PC-9 (cell line): ENCODE measurements at regions of chr5 and their contacts with region 1.

Region 1: DNA sequence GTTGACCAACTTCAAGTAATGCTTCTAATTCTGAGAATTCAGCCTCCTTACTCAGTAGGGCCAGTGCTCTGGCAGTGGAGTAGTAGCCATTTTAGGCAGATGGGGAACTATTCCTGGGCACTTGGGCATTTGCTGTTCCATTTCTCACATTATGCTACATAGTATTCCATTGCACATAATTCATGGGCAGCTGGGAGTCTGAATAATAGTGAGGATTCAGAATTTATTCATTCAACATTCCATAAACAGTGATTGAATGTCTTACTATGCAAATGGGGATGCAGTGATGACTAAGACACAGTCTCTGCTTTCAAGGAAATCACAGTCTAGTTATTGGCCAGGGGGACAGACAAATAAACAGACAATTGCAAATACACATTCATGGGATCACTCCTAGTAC is 301.0 kb upstream of the KCNN2 start:
- DNase-seq: no peak
- H3K4me3 ChIP-seq: no peak overlapping the region
- H3K27ac ChIP-seq: no peak overlapping the region
- H3K4me1 ChIP-seq: no peaks in the 10 kb centered on the region
- H3K27me3 ChIP-seq: peaks cover 7% of the 10 kb centered on the region; the same call in 1 of the 2 replicates
- CTCF ChIP-seq: no peak

Region 2: GRCh38 chr5:114001076-114001475 is 59.8 kb before region 1 on chr5:
- CTCF ChIA-PET with region 1: no interaction called
- POLR2A ChIA-PET with region 1: no interaction called
- intact Hi-C with region 1: loop called (anchors 2 kb)
- DNase-seq: no peak
- H3K4me3 ChIP-seq: no peak overlapping the region
- H3K27ac ChIP-seq: no peak overlapping the region
- H3K4me1 ChIP-seq: no peaks in the 10 kb centered on the region
- H3K27me3 ChIP-seq: no peaks in the 10 kb centered on the region
- CTCF ChIP-seq: no peak

Region 3: GRCh38 chr5:114118511-114118910 is 57.6 kb after region 1 on chr5:
- CTCF ChIA-PET with region 1: no interaction called
- POLR2A ChIA-PET with region 1: no interaction called
- intact Hi-C with region 1: no loop called
- DNase-seq: no peak
- H3K4me3 ChIP-seq: no peak overlapping the region
- H3K27ac ChIP-seq: no peak overlapping the region
- H3K4me1 ChIP-seq: no peaks in the 10 kb centered on the region
- H3K27me3 ChIP-seq: no peaks in the 10 kb centered on the region
- CTCF ChIP-seq: no peak

Region 4: GRCh38 chr5:114319821-114320220 is 259.0 kb after region 1 on chr5:
- CTCF ChIA-PET with region 1: no interaction called
- POLR2A ChIA-PET with region 1: no interaction called
- intact Hi-C with region 1: no loop called
- DNase-seq: no peak
- H3K4me3 ChIP-seq: no peak overlapping the region
- H3K27ac ChIP-seq: no peak overlapping the region
- H3K4me1 ChIP-seq: no peaks in the 10 kb centered on the region
- H3K27me3 ChIP-seq: no peaks in the 10 kb centered on the region
- CTCF ChIP-seq: no peak